BJ (cell line): ENCODE measurements at regions of chr3 and their contacts with region 1.

Region 1: DNA sequence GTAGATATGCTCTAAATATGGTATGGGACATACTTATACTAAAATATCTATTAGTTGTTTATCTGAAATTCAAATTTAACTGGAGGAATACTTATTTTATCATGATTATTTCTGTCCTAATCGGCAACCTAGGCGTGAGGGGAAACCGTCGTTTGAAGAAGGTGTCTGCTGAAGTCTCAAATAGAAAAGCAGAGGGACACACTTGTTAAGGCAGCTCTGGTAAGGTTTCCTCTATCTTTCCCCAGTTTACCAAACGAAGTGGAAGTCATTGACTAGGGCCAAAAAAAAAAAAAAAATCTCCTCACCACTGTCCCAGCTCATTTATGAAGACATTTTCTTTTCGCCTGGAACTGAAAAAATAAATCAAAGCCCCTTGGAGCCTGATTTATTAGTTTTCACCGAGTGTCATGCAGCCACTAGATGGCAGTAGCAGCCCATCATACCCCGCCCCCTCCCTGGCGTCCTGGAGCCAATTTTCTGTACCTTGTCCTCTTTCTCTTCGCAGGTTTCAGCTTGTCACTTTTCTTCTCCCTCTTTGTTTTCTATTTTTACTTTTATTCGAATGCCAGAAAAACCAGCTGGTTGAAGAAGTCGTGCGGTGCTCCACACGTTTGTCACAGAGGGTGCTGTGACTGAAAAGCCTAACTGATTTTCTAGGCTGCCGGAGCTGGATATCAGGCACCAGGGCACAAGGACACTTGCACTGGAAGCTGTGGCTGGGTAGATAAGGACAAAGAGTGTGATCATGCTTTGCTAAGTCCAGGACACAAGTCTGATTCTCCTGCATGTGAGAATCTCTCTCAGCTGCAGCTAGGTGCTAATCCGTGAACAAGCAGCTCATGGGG is 238.7 kb downstream of the ZPLD1 start:
- DNase-seq: no peak
- H3K4me3 ChIP-seq: no peak overlapping the region
- H3K27me3 ChIP-seq: no peaks in the 10 kb centered on the region
- CTCF ChIP-seq: peak; percentile 88

Region 2: GRCh38 chr3:102687851-102688555 is 14.5 kb after region 1 on chr3:
- CTCF ChIA-PET with region 1: interaction called, 11 read pairs
- POLR2A ChIA-PET with region 1: no interaction called
- DNase-seq: no peak
- H3K4me3 ChIP-seq: no peak overlapping the region
- H3K27me3 ChIP-seq: no peaks in the 10 kb centered on the region
- CTCF ChIP-seq: no peak

Region 3: GRCh38 chr3:102741108-102741507 is 67.6 kb after region 1 on chr3:
- CTCF ChIA-PET with region 1: interaction called, 44 read pairs
- POLR2A ChIA-PET with region 1: no interaction called
- DNase-seq: no peak
- H3K4me3 ChIP-seq: no peak overlapping the region
- H3K27me3 ChIP-seq: no peaks in the 10 kb centered on the region
- CTCF ChIP-seq: peak; percentile 20; the same call in 1 of the 2 replicates

Region 4: GRCh38 chr3:102926618-102927017 is 253.1 kb after region 1 on chr3:
- CTCF ChIA-PET with region 1: no interaction called
- POLR2A ChIA-PET with region 1: no interaction called
- DNase-seq: no peak
- H3K4me3 ChIP-seq: no peak overlapping the region
- H3K27me3 ChIP-seq: no peaks in the 10 kb centered on the region
- CTCF ChIP-seq: no peak

Region 5: DNA sequence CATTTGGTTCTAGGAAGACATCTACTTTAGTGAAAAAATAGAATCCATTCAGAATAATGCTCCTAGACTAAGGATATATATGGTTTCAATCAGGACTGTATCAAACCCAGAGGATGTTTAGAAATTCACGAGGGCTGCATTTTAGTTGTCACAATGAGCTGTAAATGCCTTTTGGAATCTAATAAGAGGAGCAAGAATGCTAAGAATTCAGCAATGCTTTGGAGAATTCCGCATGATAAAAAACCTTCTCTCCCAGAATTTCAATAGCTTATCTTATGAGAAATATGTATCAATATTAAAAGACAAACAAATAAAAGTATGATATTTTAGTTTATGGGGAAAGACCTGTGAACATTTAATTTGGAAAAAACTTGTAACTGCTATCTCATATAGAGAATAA is 646.4 kb after region 1 on chr3:
- CTCF ChIA-PET with region 1: no interaction called
- POLR2A ChIA-PET with region 1: no interaction called
- DNase-seq: no peak
- H3K4me3 ChIP-seq: no peak overlapping the region
- H3K27me3 ChIP-seq: no peaks in the 10 kb centered on the region
- CTCF ChIP-seq: no peak